ENCODE measurements at regions of chr14 and their contacts with region 1.

Region 1: GRCh38 chr14:81220830-81221578 is at the start of gene GTF2A1:
- DNase-seq: peak; percentile 97
- ATAC-seq: peak; percentile 79
- H3K4me3 Mint-ChIP-seq: peak within 1 kb of the TSS; percentile 100
- H3K27ac Mint-ChIP-seq: peak within 1 kb of the TSS; percentile 100
- H3K4me1 Mint-ChIP-seq: peaks cover 16% of the 10 kb centered on the region
- H3K27me3 Mint-ChIP-seq: peaks cover 2% of the 10 kb centered on the region
- total RNA-seq, gene GTF2A1: 35.1 to 35.8 TPM

Region 2: GRCh38 chr14:81170104-81170828 is 50.7 kb before region 1 on chr14:
- POLR2A ChIA-PET with region 1: interaction called, 26 read pairs
- DNase-seq: peak; percentile 88
- ATAC-seq: peak; percentile 99
- H3K4me3 Mint-ChIP-seq: peak overlapping the region; percentile 87
- H3K27ac Mint-ChIP-seq: peak overlapping the region; percentile 92
- H3K4me1 Mint-ChIP-seq: peaks cover 33% of the 10 kb centered on the region
- H3K27me3 Mint-ChIP-seq: no peaks in the 10 kb centered on the region

Region 3: DNA sequence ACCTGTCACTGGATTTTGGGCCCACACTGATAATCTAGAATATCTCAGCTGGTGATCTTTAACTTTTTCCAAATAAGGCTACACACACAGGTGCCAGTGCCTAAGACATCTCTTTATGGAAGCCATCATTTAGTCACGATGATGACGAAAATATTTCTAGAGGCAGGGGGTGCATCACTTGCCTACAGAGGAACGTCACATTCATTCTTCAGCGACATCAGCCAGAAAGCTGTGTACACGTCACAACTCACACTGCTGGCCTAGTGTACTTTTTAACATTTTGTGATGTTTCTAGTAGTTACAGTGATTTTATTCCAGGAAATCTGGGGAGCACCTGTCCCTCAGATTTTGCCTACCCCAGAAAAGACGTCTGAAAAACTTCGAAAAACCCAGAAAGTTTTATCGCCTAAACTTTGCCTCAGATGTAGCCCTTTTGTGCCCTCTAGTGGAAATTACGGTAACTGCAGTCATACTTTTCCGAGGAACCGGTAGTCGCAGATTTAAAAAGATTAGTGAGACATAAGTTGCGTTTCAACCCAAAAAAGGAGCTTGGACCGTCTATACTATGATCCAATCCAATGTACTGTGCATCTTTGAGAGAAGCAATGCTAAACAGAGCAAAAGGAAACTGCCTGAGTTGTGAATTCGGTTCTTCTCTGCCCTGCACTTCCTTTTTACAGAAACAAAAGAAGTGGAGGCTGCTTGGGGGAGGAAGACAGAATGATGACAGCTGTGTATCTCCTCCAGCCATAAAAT is 243.4 kb after region 1 on chr14:
- POLR2A ChIA-PET with region 1: interaction called, 13 read pairs
- DNase-seq: no peak
- ATAC-seq: peak; percentile 81
- H3K4me3 Mint-ChIP-seq: peak overlapping the region; percentile 87
- H3K27ac Mint-ChIP-seq: peak overlapping the region; percentile 94
- H3K4me1 Mint-ChIP-seq: peaks cover 7% of the 10 kb centered on the region
- H3K27me3 Mint-ChIP-seq: peaks cover 3% of the 10 kb centered on the region

Region 4: DNA sequence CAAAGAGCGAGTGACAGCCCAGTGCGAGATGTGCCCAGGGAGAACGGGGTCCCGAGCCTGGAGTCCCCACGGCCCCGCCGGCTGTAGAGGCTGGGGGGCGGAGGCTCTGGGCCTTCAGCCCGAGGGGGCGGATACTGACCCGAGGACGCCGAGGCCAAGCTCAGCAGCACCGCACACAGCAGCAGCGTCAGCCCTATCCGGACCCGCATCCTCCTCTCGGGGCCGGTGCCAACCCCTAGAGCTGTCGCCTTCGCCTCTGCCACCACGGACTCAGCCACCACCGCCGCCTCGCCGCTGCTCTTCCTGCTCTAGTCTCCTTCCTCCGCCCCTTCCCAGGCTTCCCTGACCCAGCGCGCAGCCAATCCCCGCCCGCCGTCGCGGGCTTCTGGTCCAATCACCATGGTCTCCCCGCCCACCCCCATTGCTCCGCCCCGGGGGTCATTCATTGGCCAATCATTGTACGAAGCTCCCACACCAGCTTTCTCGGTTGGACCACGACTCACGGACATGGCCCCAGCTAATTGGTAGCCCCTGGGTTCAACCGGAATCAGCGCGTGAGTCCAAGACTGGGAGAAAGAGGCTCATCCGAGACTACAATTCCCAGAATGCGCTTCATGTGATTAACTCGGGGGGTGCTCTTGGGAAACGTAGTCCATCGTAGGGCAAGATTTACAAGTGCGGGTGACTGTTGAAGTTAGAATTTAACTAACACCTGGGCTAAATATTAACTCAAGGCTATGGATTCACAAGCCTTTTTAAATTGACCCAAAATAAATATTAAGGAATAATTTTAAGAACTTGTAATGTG is 312.7 kb after region 1 on chr14 and contains the start of gene SEL1L:
- POLR2A ChIA-PET with region 1: interaction called, 11 read pairs
- DNase-seq: peak; percentile 98
- ATAC-seq: peak; percentile 98
- H3K4me3 Mint-ChIP-seq: peak within 1 kb of the TSS; percentile 95
- H3K27ac Mint-ChIP-seq: peak within 1 kb of the TSS; percentile 88
- H3K4me1 Mint-ChIP-seq: peaks cover 30% of the 10 kb centered on the region
- H3K27me3 Mint-ChIP-seq: no peaks in the 10 kb centered on the region
- total RNA-seq, gene SEL1L: 53.5 to 56.5 TPM

Measured in activated naive CD8-positive, alpha-beta T cell treated with anti-CD3 and anti-CD28 coated beads, Interleukin-2, amount 10 ng/mL, durations not matched to agents 7 days and 5 days (primary cell).